ENCODE measurements at regions of chr2 and their contacts with region 1.

Region 1: DNA sequence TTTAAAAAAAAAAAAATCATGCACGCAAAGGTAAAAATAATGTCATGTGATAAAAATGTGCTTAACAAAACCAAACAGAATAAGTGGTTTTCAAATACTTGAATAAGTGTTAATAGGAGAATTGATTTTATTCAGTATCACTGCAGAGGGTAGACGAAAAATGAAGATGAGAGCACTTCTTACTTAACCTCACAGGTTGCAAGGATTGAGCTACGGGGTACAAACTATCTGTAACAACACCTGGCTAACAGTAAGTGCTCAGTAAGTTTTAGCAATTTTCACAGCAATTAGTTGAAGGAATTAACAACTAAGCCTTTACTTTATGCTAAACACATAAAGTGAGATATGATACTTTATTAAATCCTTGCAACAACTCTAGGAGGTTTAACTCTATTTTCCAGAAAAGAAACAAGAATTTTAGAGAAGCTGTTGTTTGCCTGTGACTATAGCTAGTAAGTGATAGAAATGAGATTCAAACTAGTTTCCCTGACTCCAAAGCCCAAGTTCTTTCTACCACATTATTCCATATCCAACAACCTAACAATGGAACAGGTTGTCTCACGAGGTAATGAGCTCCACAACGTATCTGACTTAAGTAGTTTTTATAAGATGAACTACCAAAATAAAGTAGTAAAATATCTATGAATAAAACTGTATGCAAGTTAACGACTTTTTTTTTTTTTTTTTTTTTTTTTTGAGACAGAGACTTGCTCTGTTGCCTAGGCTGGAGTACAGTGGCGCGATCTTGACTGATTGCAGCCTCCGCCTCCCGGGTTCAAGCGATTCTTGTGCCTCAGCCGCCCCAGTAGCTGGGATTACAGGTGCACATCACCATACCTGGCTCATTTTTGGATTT is 4.7 kb downstream of the PRKD3 start:
- DNase-seq: no peak
- H3K4me3 ChIP-seq: no peak overlapping the region
- H3K27ac ChIP-seq: no peak overlapping the region
- H3K4me1 ChIP-seq: peaks cover 39% of the 10 kb centered on the region
- H3K27me3 ChIP-seq: no peaks in the 10 kb centered on the region
- CTCF ChIP-seq: no peak

Region 2: DNA sequence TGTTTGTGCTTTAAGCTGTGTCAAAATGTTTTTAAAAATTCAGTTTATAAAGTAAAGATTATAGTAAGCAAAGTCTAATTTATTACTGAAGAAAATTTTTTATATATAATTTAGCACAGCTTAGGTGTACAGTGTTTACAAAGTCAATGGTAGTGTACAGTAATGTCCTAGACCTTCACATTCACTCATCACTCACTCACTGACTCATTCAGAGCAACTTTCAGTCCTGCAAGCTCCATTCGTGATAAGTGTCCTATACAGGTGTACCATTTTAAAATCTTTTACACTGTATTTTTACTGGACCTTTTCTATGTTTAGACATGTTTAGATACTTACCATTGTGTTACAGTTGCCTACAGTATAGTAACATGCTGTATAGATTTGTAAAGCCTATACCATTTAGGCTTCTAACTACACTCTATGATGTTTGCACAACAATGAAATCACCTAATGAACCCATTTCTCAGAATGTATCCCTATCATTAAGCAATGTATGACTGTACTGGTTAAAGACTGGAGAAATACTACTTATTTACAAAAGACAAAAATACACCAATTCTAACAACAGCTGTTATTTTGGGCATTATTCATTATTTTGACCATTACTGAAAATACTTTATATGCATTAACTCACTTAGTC is 448.8 kb before region 1 on chr2:
- CTCF ChIA-PET with region 1: interaction called, 12 read pairs
- POLR2A ChIA-PET with region 1: no interaction called
- intact Hi-C with region 1: no loop called
- DNase-seq: no peak
- H3K4me3 ChIP-seq: no peak overlapping the region
- H3K27ac ChIP-seq: no peak overlapping the region
- H3K4me1 ChIP-seq: no peaks in the 10 kb centered on the region
- H3K27me3 ChIP-seq: no peaks in the 10 kb centered on the region
- CTCF ChIP-seq: no peak

Region 3: DNA sequence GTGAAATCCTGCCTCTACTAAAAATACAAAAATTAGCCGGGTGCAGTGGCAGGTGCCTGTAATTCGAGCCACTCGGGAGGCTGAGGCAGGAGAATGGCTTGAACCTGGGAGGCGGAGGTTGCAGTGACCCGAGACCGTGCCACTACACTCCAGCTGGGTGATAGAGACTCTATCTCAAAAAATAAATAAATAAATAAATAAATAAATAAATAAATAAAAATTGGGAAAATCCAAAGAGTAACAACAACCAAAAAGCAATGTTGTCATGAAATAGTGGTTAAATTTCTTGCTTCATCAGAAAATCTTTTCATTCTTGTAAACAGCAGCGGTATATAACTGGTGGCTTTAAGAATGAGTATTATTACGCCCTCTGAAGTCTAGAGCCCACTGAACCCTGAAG is 290.2 kb before region 1 on chr2:
- CTCF ChIA-PET with region 1: no interaction called
- POLR2A ChIA-PET with region 1: no interaction called
- intact Hi-C with region 1: no loop called
- DNase-seq: no peak
- H3K4me3 ChIP-seq: no peak overlapping the region
- H3K27ac ChIP-seq: no peak overlapping the region
- H3K4me1 ChIP-seq: no peaks in the 10 kb centered on the region
- H3K27me3 ChIP-seq: no peaks in the 10 kb centered on the region
- CTCF ChIP-seq: no peak

Region 4: GRCh38 chr2:37263839-37264238 is 56.1 kb before region 1 on chr2:
- CTCF ChIA-PET with region 1: no interaction called
- POLR2A ChIA-PET with region 1: no interaction called
- intact Hi-C with region 1: no loop called
- DNase-seq: no peak
- H3K4me3 ChIP-seq: no peak overlapping the region
- H3K27ac ChIP-seq: no peak overlapping the region
- H3K4me1 ChIP-seq: no peaks in the 10 kb centered on the region
- H3K27me3 ChIP-seq: no peaks in the 10 kb centered on the region
- CTCF ChIP-seq: no peak

Measured in A673 (cell line).